A673 (cell line): ENCODE measurements at regions of chr2 and their contacts with region 1.

Region 1: GRCh38 chr2:231905026-231905425 is 21.2 kb downstream of the NPPC start:
- DNase-seq: no peak
- H3K4me3 ChIP-seq: no peak overlapping the region
- H3K27ac ChIP-seq: no peak overlapping the region
- H3K4me1 ChIP-seq: no peaks in the 10 kb centered on the region
- H3K27me3 ChIP-seq: no peaks in the 10 kb centered on the region
- CTCF ChIP-seq: no peak

Region 2: GRCh38 chr2:230000118-230000841 is 1904.7 kb before region 1 on chr2:
- CTCF ChIA-PET with region 1: no interaction called
- POLR2A ChIA-PET with region 1: no interaction called
- intact Hi-C with region 1: no loop called
- DNase-seq: no peak
- H3K4me3 ChIP-seq: no peak overlapping the region
- H3K27ac ChIP-seq: no peak overlapping the region
- H3K4me1 ChIP-seq: no peaks in the 10 kb centered on the region
- H3K27me3 ChIP-seq: no peaks in the 10 kb centered on the region
- CTCF ChIP-seq: no peak

Region 3: DNA sequence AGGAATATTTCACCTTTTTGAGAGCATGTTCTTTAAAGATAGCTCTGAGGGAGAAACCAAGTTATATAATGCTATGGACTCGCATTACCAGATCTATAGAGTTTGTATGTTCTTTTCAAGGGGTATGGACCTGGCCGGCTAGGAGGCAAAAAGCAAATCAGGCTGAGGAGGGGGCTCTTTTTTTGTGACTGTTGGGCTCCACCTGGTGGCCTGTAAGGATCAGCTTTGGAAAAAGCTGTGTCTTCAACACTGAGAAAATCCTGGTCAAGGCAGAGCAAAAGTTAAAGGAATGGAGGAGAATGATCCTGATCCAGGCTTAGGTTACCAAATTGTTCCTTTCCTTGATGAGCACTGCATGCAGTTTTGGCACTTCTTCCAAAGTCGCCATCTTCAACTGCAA is 237.0 kb after region 1 on chr2:
- CTCF ChIA-PET with region 1: interaction called, 10 read pairs
- POLR2A ChIA-PET with region 1: no interaction called
- intact Hi-C with region 1: loop called (anchors 5 kb)
- DNase-seq: peak; percentile 51
- H3K4me3 ChIP-seq: no peak overlapping the region
- H3K27ac ChIP-seq: no peak overlapping the region
- H3K4me1 ChIP-seq: no peaks in the 10 kb centered on the region
- H3K27me3 ChIP-seq: no peaks in the 10 kb centered on the region
- CTCF ChIP-seq: peak; percentile 77

Region 4: DNA sequence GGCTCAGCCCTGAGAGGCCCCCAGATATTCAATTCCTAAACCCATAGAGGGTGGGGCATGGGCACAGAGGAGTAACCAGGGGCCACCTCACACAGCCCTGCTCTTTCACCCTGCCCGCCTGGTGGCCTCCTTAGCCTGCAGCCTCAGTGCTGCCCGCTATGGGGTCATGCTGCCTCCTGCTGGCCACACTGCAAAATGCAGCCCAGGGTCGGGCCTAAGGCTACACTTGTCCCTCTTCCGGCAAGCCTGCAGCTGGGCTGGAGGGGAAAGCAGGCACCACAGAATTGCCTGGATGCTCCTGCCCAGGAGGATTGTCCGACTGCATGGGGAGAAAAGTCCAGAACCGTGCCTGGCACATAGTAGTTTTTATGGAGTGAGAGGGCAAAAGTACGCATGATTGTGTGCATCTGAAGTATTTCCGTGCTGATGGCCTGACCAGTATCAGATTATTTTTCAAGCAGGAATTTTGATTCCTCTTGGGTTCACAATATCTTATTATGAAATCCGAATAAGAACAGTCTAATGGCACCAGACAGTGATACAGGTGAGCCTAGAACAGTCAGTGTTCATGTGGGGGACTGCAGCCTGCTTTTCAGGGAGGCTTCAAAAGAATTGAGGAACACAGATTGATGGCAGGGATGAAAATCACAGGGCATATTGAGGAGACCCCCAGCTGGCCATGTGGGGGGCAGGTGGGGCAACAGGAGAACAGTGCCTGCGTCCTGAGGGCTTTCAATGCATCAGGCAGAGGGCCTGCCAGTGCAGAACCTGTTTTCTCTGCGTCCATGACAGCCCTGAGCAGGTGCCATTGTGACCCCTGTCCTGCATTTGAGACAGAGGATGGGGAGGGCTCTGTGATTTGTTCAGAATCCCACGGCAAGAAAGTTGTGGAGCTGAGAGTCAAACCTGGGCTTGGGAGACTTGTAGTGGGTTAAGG is 422.3 kb after region 1 on chr2:
- CTCF ChIA-PET with region 1: interaction called, 3 read pairs
- POLR2A ChIA-PET with region 1: no interaction called
- intact Hi-C with region 1: loop called (anchors 2 kb)
- DNase-seq: peak; percentile 66
- H3K4me3 ChIP-seq: no peak overlapping the region
- H3K27ac ChIP-seq: no peak overlapping the region
- H3K4me1 ChIP-seq: no peaks in the 10 kb centered on the region
- H3K27me3 ChIP-seq: no peaks in the 10 kb centered on the region
- CTCF ChIP-seq: peak; percentile 76

Region 5: GRCh38 chr2:232444409-232445148 is 539.6 kb after region 1 on chr2:
- CTCF ChIA-PET with region 1: no interaction called
- POLR2A ChIA-PET with region 1: no interaction called
- intact Hi-C with region 1: loop called (anchors 5 kb)
- DNase-seq: peak; percentile 86
- H3K4me3 ChIP-seq: no peak overlapping the region
- H3K27ac ChIP-seq: no peak overlapping the region
- H3K4me1 ChIP-seq: no peaks in the 10 kb centered on the region
- H3K27me3 ChIP-seq: no peaks in the 10 kb centered on the region
- CTCF ChIP-seq: peak; percentile 78

Region 6: DNA sequence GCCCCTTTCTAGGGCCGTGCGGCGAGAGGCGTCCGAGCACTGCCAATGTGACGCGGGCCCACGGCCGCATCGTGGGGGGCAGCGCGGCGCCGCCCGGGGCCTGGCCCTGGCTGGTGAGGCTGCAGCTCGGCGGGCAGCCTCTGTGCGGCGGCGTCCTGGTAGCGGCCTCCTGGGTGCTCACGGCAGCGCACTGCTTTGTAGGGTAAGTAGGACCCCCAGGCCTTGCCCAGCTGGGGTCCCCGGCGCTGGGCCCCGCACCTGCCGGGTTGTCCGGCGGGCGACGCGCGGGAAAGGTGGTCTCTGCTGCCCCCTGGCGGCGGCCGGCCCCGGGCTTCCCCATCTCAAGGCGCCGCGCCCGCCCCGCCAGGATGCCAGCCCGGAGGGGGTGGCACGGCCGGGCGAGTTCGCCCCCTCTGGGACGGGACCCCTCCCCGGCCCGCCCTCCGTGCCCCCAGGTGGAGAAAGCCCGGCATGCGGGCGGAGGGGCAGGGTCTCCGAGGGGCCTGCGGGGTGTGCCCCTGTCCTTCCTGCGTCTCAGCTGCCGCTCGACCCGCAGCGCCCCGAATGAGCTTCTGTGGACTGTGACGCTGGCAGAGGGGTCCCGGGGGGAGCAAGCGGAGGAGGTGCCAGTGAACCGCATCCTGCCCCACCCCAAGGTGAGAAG is 617.1 kb after region 1 on chr2:
- CTCF ChIA-PET with region 1: no interaction called
- POLR2A ChIA-PET with region 1: no interaction called
- intact Hi-C with region 1: loop called (anchors 5 kb)
- DNase-seq: peak; percentile 37
- H3K4me3 ChIP-seq: peak overlapping the region; percentile 19
- H3K27ac ChIP-seq: no peak overlapping the region
- H3K4me1 ChIP-seq: peaks cover 7% of the 10 kb centered on the region
- H3K27me3 ChIP-seq: peaks cover 31% of the 10 kb centered on the region
- CTCF ChIP-seq: peak; percentile 55; the same call in 1 of the 2 replicates